ENCODE measurements at regions of chr2 and their contacts with region 1.

Region 1: GRCh38 chr2:20135631-20136050 is 84.2 kb upstream of the LAPTM4A start:
- DNase-seq: no peak
- H3K4me3 ChIP-seq: no peak overlapping the region
- H3K27ac ChIP-seq: no peak overlapping the region
- H3K4me1 ChIP-seq: peaks cover 39% of the 10 kb centered on the region
- H3K27me3 ChIP-seq: no peaks in the 10 kb centered on the region
- CTCF ChIP-seq: peak; percentile 55 to 72

Region 2: GRCh38 chr2:19256121-19256601 is 879.5 kb before region 1 on chr2:
- CTCF ChIA-PET with region 1: no interaction called
- dilution Hi-C with region 1: no loop called
- in situ Hi-C with region 1: no loop called
- intact Hi-C with region 1: no loop called
- DNase-seq: peak; percentile 86
- H3K4me3 ChIP-seq: no peak overlapping the region
- H3K27ac ChIP-seq: peak overlapping the region; percentile 28
- H3K4me1 ChIP-seq: peaks cover 24% of the 10 kb centered on the region
- H3K27me3 ChIP-seq: no peaks in the 10 kb centered on the region
- CTCF ChIP-seq: no peak

Region 3: GRCh38 chr2:20186078-20186854 is 50.6 kb after region 1 on chr2:
- CTCF ChIA-PET with region 1: interaction called, 3 read pairs
- dilution Hi-C with region 1: no loop called
- in situ Hi-C with region 1: no loop called
- intact Hi-C with region 1: loop called (anchors 1 kb)
- DNase-seq: no peak
- H3K4me3 ChIP-seq: no peak overlapping the region
- H3K27ac ChIP-seq: no peak overlapping the region
- H3K4me1 ChIP-seq: peaks cover 42% of the 10 kb centered on the region
- H3K27me3 ChIP-seq: no peaks in the 10 kb centered on the region
- CTCF ChIP-seq: no peak

Region 4: GRCh38 chr2:20291106-20291564 is 155.5 kb after region 1 on chr2:
- CTCF ChIA-PET with region 1: no interaction called
- dilution Hi-C with region 1: no loop called
- in situ Hi-C with region 1: no loop called
- intact Hi-C with region 1: no loop called
- DNase-seq: peak; percentile 80
- H3K4me3 ChIP-seq: no peak overlapping the region
- H3K27ac ChIP-seq: peak overlapping the region; percentile 27
- H3K4me1 ChIP-seq: peaks cover 19% of the 10 kb centered on the region
- H3K27me3 ChIP-seq: no peaks in the 10 kb centered on the region
- CTCF ChIP-seq: peak; percentile 79 to 82